HCT116 (cell line): ENCODE measurements at regions of chr4 and their contacts with region 1.

Region 1: DNA sequence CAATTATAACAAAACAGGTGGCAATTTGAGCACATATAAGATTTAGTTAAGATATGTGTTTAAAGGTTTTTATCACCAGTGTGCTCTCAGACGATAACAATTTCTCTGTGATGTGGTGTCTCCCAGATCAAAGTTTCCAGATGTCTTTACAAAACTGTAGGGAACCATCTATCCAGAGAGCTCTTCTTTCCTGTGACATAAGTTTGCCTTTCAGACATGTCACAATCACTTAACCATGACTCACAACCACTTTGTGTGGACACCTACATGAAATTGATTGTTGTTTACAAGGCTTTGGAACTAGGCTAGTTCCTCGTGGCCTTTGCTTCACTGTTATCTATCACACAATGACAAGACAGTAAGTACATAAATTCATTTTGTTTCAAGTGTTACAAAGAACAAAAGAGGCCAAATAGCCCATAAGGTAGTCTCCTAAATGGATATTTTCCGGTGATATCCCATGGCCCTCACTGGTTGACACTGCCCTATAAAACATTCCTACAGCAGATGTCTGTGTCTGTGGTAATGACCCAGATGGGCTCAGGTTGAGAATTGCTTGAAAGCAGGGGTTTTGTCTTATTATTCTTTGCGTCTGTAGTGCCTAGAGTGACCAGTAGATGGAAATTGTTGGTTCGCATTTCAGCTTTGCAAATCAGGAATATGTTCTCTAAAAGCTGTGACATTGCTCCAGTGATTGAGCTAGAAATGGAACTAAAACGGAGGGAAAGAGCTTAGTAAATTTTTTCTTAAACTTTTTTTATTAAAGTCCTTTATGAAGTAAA is 297.8 kb upstream of the FAM241A start:
- DNase-seq: no peak
- ATAC-seq: peak; percentile 81
- H3K4me3 ChIP-seq: no peak overlapping the region
- H3K27ac ChIP-seq: no peak overlapping the region
- H3K4me1 ChIP-seq: no peaks in the 10 kb centered on the region
- H3K27me3 ChIP-seq: no peaks in the 10 kb centered on the region
- CTCF ChIP-seq: peak in 2 of 3 experiments; percentile 49 to 50; a peak in 4 of 6 replicates
- POLR2A ChIP-seq: no peak
- RAD21 ChIP-seq: no peak

Region 2: GRCh38 chr4:111400741-111401140 is 446.7 kb before region 1 on chr4:
- CTCF ChIA-PET with region 1: no interaction called
- POLR2A ChIA-PET with region 1: no interaction called
- RAD21 ChIA-PET with region 1: no interaction called
- intact Hi-C with region 1: no loop called
- DNase-seq: no peak
- ATAC-seq: no peak
- H3K4me3 ChIP-seq: no peak overlapping the region
- H3K27ac ChIP-seq: no peak overlapping the region
- H3K4me1 ChIP-seq: no peaks in the 10 kb centered on the region
- H3K27me3 ChIP-seq: no peaks in the 10 kb centered on the region
- CTCF ChIP-seq: no peak
- POLR2A ChIP-seq: no peak
- RAD21 ChIP-seq: no peak

Region 3: DNA sequence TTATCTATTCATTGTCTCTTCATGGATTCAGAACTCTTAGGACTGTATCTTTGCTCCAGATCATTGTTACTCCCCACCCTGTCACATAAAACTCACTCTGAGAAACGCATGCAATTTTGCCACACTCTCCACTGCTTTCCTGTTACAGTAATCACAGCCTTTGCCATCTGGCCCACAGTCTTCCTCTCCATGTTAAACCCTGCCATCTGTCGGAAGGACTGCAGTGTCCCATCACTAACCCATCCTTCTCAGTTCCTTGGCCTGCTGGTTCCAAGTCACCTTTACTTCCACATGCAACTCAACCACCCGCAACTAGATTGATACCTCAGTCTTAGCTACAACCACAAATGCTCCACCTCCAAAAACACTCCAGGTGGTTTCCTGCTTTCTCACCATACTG is 10.9 kb before region 1 on chr4:
- CTCF ChIA-PET with region 1: no interaction called
- POLR2A ChIA-PET with region 1: no interaction called
- RAD21 ChIA-PET with region 1: no interaction called
- intact Hi-C with region 1: no loop called
- DNase-seq: no peak
- ATAC-seq: no peak
- H3K4me3 ChIP-seq: no peak overlapping the region
- H3K27ac ChIP-seq: no peak overlapping the region
- H3K4me1 ChIP-seq: no peaks in the 10 kb centered on the region
- H3K27me3 ChIP-seq: no peaks in the 10 kb centered on the region
- CTCF ChIP-seq: no peak
- POLR2A ChIP-seq: no peak
- RAD21 ChIP-seq: no peak

Region 4: GRCh38 chr4:111937368-111937767 is 89.9 kb after region 1 on chr4:
- CTCF ChIA-PET with region 1: interaction called, 10 read pairs
- POLR2A ChIA-PET with region 1: no interaction called
- RAD21 ChIA-PET with region 1: no interaction called
- intact Hi-C with region 1: loop called (anchors 5 kb)
- DNase-seq: peak; percentile 48
- ATAC-seq: peak; percentile 88
- H3K4me3 ChIP-seq: no peak overlapping the region
- H3K27ac ChIP-seq: no peak overlapping the region
- H3K4me1 ChIP-seq: 0 out of 4 replicates have a peak, but pooled peaks cover 0 to 3% of the 10 kb centered on the region in 2 experiments
- H3K27me3 ChIP-seq: no peaks in the 10 kb centered on the region
- CTCF ChIP-seq: peak; percentile 31 to 72 (median 68); a peak in 5 of 6 replicates
- POLR2A ChIP-seq: no peak
- RAD21 ChIP-seq: peak; percentile 79

Region 5: GRCh38 chr4:111963158-111963700 is 115.7 kb after region 1 on chr4:
- CTCF ChIA-PET with region 1: no interaction called
- POLR2A ChIA-PET with region 1: no interaction called
- RAD21 ChIA-PET with region 1: no interaction called
- intact Hi-C with region 1: no loop called
- DNase-seq: no peak
- ATAC-seq: no peak
- H3K4me3 ChIP-seq: no peak overlapping the region
- H3K27ac ChIP-seq: no peak overlapping the region
- H3K4me1 ChIP-seq: peaks cover 17 to 30% of the 10 kb centered on the region in 2 experiments
- H3K27me3 ChIP-seq: no peaks in the 10 kb centered on the region
- CTCF ChIP-seq: no peak
- POLR2A ChIP-seq: no peak
- RAD21 ChIP-seq: no peak